K562 (cell line): ENCODE measurements at regions of chr1 and their contacts with region 1.

Region 1: DNA sequence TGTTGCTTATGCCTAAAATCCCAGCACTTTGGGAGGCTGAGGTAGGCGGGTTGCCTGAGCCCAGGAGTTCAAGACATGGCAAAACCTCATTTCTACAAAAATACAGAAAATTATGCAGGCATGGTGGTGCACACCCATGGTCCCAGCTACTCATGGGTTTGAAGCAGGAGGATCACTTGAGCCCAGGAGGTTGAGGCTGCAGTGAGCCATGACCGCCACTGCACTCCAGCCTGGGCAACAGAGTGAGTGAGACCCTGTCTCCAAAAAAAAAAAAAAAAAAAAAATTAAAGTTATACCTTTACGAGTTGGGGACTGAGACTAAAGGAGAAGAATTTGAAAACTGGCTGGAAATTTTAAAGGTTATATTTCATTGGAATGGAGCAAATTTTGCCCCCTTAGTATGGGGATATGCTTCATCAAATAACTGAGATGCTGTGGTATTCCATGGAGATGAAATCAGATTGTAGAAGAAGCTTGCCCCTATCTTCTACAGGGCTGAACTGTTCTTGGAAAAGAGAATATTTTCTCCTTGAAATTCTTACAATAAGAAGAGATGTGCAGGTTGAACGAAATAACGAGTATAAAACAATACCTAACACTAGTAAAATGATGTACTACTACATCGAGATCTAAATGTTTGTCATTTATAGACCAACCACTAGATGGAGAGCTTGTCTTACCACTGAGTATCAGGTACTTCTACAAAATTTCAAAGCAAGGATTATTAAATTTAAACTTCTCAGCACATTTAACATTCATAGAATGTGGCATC is 34.9 kb upstream of the SCYL3 start:
- DNase-seq: peak; percentile 25 to 60 (median 30)
- ATAC-seq: peak; percentile 88
- H3K4me3 ChIP-seq: no peak overlapping the region
- H3K27ac ChIP-seq: no peak overlapping the region
- H3K4me1 ChIP-seq: no peaks in the 10 kb centered on the region
- H3K27me3 ChIP-seq: no peaks in the 10 kb centered on the region
- CTCF ChIP-seq: peak; percentile 55 to 85 (median 60); a peak in 5 of 6 replicates
- EP300 ChIP-seq: no peak
- POLR2A ChIP-seq: no peak
- RAD21 ChIP-seq: peak; percentile 94 to 96

Region 2: DNA sequence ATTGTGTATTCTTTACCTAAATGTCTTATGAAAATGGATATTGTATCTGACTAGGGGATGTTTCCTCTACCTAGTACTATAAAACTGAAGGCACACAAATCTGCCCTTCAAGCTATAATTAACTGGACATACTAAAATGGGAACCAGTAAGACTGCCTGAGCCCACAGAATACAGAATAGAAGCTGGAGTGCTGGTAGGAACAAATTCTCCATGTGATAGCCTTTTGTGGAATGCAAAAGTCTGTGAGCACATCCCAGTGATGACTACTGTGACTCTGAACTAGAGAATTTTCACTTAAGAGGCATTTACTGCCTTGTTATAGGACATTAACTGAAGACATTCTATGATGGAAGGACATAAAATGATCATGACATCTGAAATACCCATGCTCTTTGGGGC is 115.6 kb after region 1 on chr1:
- CTCF ChIA-PET with region 1: no interaction called
- POLR2A ChIA-PET with region 1: no interaction called
- in situ Hi-C with region 1: no loop called
- intact Hi-C with region 1: no loop called
- DNase-seq: no peak
- ATAC-seq: no peak
- H3K4me3 ChIP-seq: no peak overlapping the region
- H3K27ac ChIP-seq: no peak overlapping the region
- H3K4me1 ChIP-seq: peaks cover 0 to 11% of the 10 kb centered on the region in 2 experiments; a peak in 3 of 5 replicates
- H3K27me3 ChIP-seq: no peaks in the 10 kb centered on the region
- CTCF ChIP-seq: no peak
- EP300 ChIP-seq: no peak
- POLR2A ChIP-seq: no peak
- RAD21 ChIP-seq: no peak

Region 3: GRCh38 chr1:170175056-170175455 is 246.4 kb after region 1 on chr1:
- CTCF ChIA-PET with region 1: no interaction called
- POLR2A ChIA-PET with region 1: no interaction called
- in situ Hi-C with region 1: no loop called
- intact Hi-C with region 1: no loop called
- DNase-seq: no peak
- ATAC-seq: no peak
- H3K4me3 ChIP-seq: no peak overlapping the region
- H3K27ac ChIP-seq: no peak overlapping the region
- H3K4me1 ChIP-seq: no peaks in the 10 kb centered on the region
- H3K27me3 ChIP-seq: no peaks in the 10 kb centered on the region
- CTCF ChIP-seq: no peak
- EP300 ChIP-seq: no peak
- POLR2A ChIP-seq: no peak
- RAD21 ChIP-seq: no peak

Region 4: DNA sequence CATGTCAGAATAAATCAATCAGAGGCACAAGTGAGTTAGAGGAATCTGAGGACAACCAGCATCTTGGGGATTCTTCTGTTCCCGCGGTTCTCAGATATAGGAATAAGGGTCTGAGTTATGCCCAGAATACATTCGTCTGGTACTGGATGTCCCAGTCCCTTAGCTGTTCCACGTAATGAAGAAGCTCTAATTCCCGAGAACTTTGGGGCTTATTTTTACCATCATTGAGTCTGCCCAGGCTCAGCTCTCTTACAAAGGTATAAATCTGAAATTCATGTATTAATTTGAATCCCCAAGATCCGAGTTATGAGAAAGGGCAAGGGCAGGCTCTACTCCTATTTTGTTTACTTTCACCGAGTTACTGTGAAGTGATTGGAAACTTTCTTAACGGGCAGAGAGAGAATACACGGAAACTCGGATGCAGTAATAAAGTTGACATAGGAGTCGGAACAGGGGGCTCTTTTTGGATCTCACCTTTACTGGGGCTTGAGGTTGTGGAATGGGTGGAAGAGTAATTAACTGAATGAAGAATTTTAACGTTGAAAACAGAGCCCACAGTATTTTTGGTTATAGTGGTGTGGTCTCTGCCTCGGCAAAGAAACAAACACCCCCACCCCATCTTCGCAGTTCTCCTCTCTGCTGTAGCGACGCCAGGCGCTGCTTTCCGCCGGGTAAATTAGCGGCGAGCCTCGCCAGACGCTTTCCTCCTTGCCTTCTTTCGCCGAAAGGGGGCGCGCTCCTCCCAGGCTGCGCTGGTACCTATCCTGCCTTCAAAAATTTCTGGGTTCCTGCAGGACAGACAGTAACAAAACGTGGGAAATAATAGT is 742.4 kb after region 1 on chr1:
- CTCF ChIA-PET with region 1: no interaction called
- POLR2A ChIA-PET with region 1: no interaction called
- in situ Hi-C with region 1: no loop called
- intact Hi-C with region 1: loop called (anchors 5 kb)
- DNase-seq: peak; percentile 32 to 63 (median 44)
- ATAC-seq: peak; percentile 97
- H3K4me3 ChIP-seq: no peak overlapping the region
- H3K27ac ChIP-seq: no peak overlapping the region
- H3K4me1 ChIP-seq: no peaks in the 10 kb centered on the region
- H3K27me3 ChIP-seq: peaks cover 19 to 25% of the 10 kb centered on the region in 2 experiments; a peak in 3 of 5 replicates
- CTCF ChIP-seq: peak; percentile 66 to 84 (median 77)
- EP300 ChIP-seq: no peak
- POLR2A ChIP-seq: no peak
- RAD21 ChIP-seq: peak; percentile 28 to 53; a peak in 3 of 4 replicates

Region 5: GRCh38 chr1:170929835-170930554 is 1001.4 kb after region 1 on chr1:
- CTCF ChIA-PET with region 1: interaction called, 6 read pairs
- POLR2A ChIA-PET with region 1: no interaction called
- in situ Hi-C with region 1: no loop called
- intact Hi-C with region 1: loop called (anchors 2 kb)
- DNase-seq: peak; percentile 41 to 58 (median 51)
- ATAC-seq: peak; percentile 91
- H3K4me3 ChIP-seq: no peak overlapping the region
- H3K27ac ChIP-seq: no peak overlapping the region
- H3K4me1 ChIP-seq: no peaks in the 10 kb centered on the region
- H3K27me3 ChIP-seq: no peaks in the 10 kb centered on the region
- CTCF ChIP-seq: peak; percentile 57 to 65 (median 65)
- EP300 ChIP-seq: no peak
- POLR2A ChIP-seq: no peak
- RAD21 ChIP-seq: peak; percentile 64 to 73

Region 6: GRCh38 chr1:171226747-171227370 is 1298.2 kb after region 1 on chr1:
- CTCF ChIA-PET with region 1: interaction called, 3 read pairs
- POLR2A ChIA-PET with region 1: no interaction called
- in situ Hi-C with region 1: no loop called
- intact Hi-C with region 1: loop called (anchors 5 kb)
- DNase-seq: peak; percentile 40 to 50 (median 47)
- ATAC-seq: peak; percentile 88
- H3K4me3 ChIP-seq: no peak overlapping the region
- H3K27ac ChIP-seq: no peak overlapping the region
- H3K4me1 ChIP-seq: no peaks in the 10 kb centered on the region
- H3K27me3 ChIP-seq: no peaks in the 10 kb centered on the region
- CTCF ChIP-seq: peak; percentile 61 to 64 (median 63); a peak in 5 of 6 replicates
- EP300 ChIP-seq: no peak
- POLR2A ChIP-seq: no peak
- RAD21 ChIP-seq: peak; percentile 41 to 65; a peak in 3 of 4 replicates